GM12878 (cell line): ENCODE measurements at regions of chr3 and their contacts with region 1.

Region 1: GRCh38 chr3:119352849-119353502 is 58.8 kb downstream of the ARHGAP31 start:
- DNase-seq: no peak
- ATAC-seq: peak; percentile 62
- H3K4me3 ChIP-seq: no peak overlapping the region
- H3K27ac ChIP-seq: peak overlapping the region; percentile 53
- H3K4me1 ChIP-seq: peaks cover 40% of the 10 kb centered on the region
- H3K27me3 ChIP-seq: no peaks in the 10 kb centered on the region
- CTCF ChIP-seq: peak; percentile 34 to 42 (median 34); a peak in 4 of 6 replicates
- EP300 ChIP-seq: no peak
- POLR2A ChIP-seq: no peak
- RAD21 ChIP-seq: peak; percentile 72

Region 2: GRCh38 chr3:119145500-119146191 is 207.3 kb before region 1 on chr3 and contains the start of gene TEX55:
- CTCF ChIA-PET with region 1: no interaction called
- POLR2A ChIA-PET with region 1: no interaction called
- RAD21 ChIA-PET with region 1: no interaction called
- SMC1A ChIA-PET with region 1: interaction called, 3 read pairs
- in situ Hi-C with region 1: no loop called
- intact Hi-C with region 1: loop called (anchors 5 kb)
- DNase-seq: no peak
- ATAC-seq: peak; percentile 85
- H3K4me3 ChIP-seq: no peak within 1 kb of the TSS
- H3K27ac ChIP-seq: no peak within 1 kb of the TSS
- H3K4me1 ChIP-seq: no peaks in the 10 kb centered on the region
- H3K27me3 ChIP-seq: no peaks in the 10 kb centered on the region
- CTCF ChIP-seq: peak; percentile 48 to 57 (median 49); a peak in 5 of 6 replicates
- EP300 ChIP-seq: no peak
- POLR2A ChIP-seq: no peak
- RAD21 ChIP-seq: peak; percentile 47
- polyA plus RNA-seq, gene TEX55: not detected

Region 3: DNA sequence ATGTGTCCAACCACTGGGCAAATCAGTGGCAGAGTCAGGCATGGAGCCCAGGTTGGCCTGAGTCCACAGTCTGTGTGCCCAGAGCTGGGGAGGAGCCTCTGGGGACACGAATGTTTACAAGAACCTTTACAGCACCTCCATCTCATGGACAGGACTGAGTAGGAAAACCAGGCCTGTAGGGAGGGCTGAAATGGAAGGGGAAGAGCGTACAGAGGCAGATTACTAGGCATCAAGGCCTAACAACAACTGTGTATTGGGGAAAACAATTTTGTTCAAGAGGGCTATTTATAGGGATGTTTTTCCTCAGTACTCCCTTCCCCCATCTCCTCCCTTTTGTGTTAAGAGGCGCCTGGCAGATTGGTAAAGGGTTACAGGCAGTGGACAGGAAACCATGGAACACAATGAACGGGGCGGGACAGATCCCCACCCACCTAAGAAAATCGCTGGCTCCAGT is 73.8 kb before region 1 on chr3:
- CTCF ChIA-PET with region 1: interaction called, 51 read pairs
- POLR2A ChIA-PET with region 1: no interaction called
- RAD21 ChIA-PET with region 1: interaction called, 26 read pairs
- SMC1A ChIA-PET with region 1: interaction called, 62 read pairs
- in situ Hi-C with region 1: no loop called
- intact Hi-C with region 1: loop called (anchors 2 kb)
- DNase-seq: no peak
- ATAC-seq: no peak; the same call in 2 of the 3 replicates
- H3K4me3 ChIP-seq: no peak overlapping the region
- H3K27ac ChIP-seq: no peak overlapping the region
- H3K4me1 ChIP-seq: no peaks in the 10 kb centered on the region; the same call in 1 of the 2 replicates
- H3K27me3 ChIP-seq: no peaks in the 10 kb centered on the region
- CTCF ChIP-seq: no peak
- EP300 ChIP-seq: no peak
- POLR2A ChIP-seq: no peak
- RAD21 ChIP-seq: no peak

Region 4: GRCh38 chr3:119302697-119303551 is 50.1 kb before region 1 on chr3:
- CTCF ChIA-PET with region 1: interaction called, 20 read pairs
- POLR2A ChIA-PET with region 1: interaction called, 6 read pairs
- RAD21 ChIA-PET with region 1: interaction called, 66 read pairs
- SMC1A ChIA-PET with region 1: interaction called, 62 read pairs
- in situ Hi-C with region 1: no loop called
- intact Hi-C with region 1: no loop called
- DNase-seq: no peak
- ATAC-seq: peak; percentile 63
- H3K4me3 ChIP-seq: peak overlapping the region; percentile 13; the same call in 1 of the 2 replicates
- H3K27ac ChIP-seq: peak overlapping the region; percentile 62
- H3K4me1 ChIP-seq: peaks cover 49% of the 10 kb centered on the region
- H3K27me3 ChIP-seq: no peaks in the 10 kb centered on the region
- CTCF ChIP-seq: no peak
- EP300 ChIP-seq: no peak
- POLR2A ChIP-seq: no peak
- RAD21 ChIP-seq: no peak

Region 5: GRCh38 chr3:119331661-119332060 is 21.3 kb before region 1 on chr3:
- CTCF ChIA-PET with region 1: interaction called, 15 read pairs
- POLR2A ChIA-PET with region 1: no interaction called
- RAD21 ChIA-PET with region 1: interaction called, 6 read pairs
- SMC1A ChIA-PET with region 1: interaction called, 32 read pairs
- in situ Hi-C with region 1: no loop called
- intact Hi-C with region 1: no loop called
- DNase-seq: no peak
- ATAC-seq: no peak
- H3K4me3 ChIP-seq: no peak overlapping the region
- H3K27ac ChIP-seq: no peak overlapping the region
- H3K4me1 ChIP-seq: peaks cover 12% of the 10 kb centered on the region
- H3K27me3 ChIP-seq: no peaks in the 10 kb centered on the region
- CTCF ChIP-seq: no peak
- EP300 ChIP-seq: no peak
- POLR2A ChIP-seq: no peak
- RAD21 ChIP-seq: no peak

Region 6: GRCh38 chr3:119367000-119367399 is 14.0 kb after region 1 on chr3:
- CTCF ChIA-PET with region 1: interaction called, 4 read pairs
- POLR2A ChIA-PET with region 1: no interaction called
- RAD21 ChIA-PET with region 1: interaction called, 5 read pairs
- SMC1A ChIA-PET with region 1: interaction called, 11 read pairs
- in situ Hi-C with region 1: no loop called
- intact Hi-C with region 1: no loop called
- DNase-seq: no peak
- ATAC-seq: peak; percentile 69
- H3K4me3 ChIP-seq: no peak overlapping the region
- H3K27ac ChIP-seq: no peak overlapping the region
- H3K4me1 ChIP-seq: no peaks in the 10 kb centered on the region
- H3K27me3 ChIP-seq: no peaks in the 10 kb centered on the region
- CTCF ChIP-seq: no peak
- EP300 ChIP-seq: no peak
- POLR2A ChIP-seq: no peak
- RAD21 ChIP-seq: no peak